ENCODE measurements at regions of chr1 and their contacts with region 1.

Region 1: DNA sequence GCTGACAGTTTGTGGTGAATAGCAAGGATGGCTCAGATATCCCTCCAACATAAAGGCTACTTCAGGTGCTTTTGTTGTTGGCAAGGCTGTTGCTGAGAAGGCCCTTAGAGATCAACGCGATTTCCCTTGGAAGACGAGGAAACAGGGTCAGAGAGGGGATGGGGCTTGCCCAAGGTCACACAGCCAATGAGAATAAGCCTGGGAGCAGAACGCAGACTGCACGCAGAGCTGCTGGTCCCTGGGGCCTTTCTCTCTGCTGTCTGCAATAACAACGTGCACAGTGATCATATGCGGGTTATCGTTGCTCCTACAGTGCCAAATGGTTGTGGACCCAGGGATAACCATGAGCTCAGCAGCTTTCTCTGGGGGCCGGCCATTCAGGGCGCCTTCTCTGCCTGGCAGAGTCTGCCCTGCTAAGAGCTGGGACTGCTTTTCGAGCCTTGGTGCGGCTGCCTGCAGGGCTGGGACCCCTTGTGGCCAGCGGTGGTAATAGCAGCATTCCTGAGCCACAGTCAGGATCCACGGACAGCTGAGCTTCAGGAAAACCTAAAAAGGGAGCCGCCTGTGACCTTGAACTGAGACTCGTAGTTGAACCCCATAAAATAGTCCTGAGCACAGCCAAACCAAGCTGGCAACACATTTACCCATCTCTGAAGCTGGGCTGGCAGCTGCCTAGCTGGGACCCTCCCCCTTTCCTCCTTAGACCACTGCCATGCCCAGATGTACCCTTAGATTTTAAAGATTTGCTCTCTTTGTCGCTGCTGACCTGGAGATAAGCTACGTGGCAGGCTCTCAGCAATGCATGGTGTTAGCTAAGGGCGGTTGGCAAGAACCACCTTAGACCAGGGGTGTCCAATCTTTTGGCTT is 39.8 kb downstream of the HTR6 start:
- DNase-seq: peak; percentile 33
- H3K4me3 ChIP-seq: no peak overlapping the region
- H3K27ac ChIP-seq: no peak overlapping the region
- H3K27me3 ChIP-seq: no peaks in the 10 kb centered on the region
- CTCF ChIP-seq: peak; percentile 97

Region 2: GRCh38 chr1:19682257-19682656 is 22.2 kb before region 1 on chr1:
- CTCF ChIA-PET with region 1: interaction called, 20 read pairs
- POLR2A ChIA-PET with region 1: interaction called, 5 read pairs
- DNase-seq: peak; percentile 70
- H3K4me3 ChIP-seq: no peak overlapping the region
- H3K27ac ChIP-seq: no peak overlapping the region
- H3K27me3 ChIP-seq: no peaks in the 10 kb centered on the region
- CTCF ChIP-seq: no peak

Region 3: GRCh38 chr1:19688041-19688842 is 16.2 kb before region 1 on chr1:
- CTCF ChIA-PET with region 1: interaction called, 25 read pairs
- POLR2A ChIA-PET with region 1: interaction called, 5 read pairs
- DNase-seq: no peak
- H3K4me3 ChIP-seq: no peak overlapping the region
- H3K27ac ChIP-seq: no peak overlapping the region
- H3K27me3 ChIP-seq: no peaks in the 10 kb centered on the region
- CTCF ChIP-seq: no peak

Region 4: GRCh38 chr1:19694298-19694697 is 10.2 kb before region 1 on chr1:
- CTCF ChIA-PET with region 1: interaction called, 25 read pairs
- POLR2A ChIA-PET with region 1: no interaction called
- DNase-seq: no peak
- H3K4me3 ChIP-seq: no peak overlapping the region
- H3K27ac ChIP-seq: no peak overlapping the region
- H3K27me3 ChIP-seq: no peaks in the 10 kb centered on the region
- CTCF ChIP-seq: no peak

Region 5: DNA sequence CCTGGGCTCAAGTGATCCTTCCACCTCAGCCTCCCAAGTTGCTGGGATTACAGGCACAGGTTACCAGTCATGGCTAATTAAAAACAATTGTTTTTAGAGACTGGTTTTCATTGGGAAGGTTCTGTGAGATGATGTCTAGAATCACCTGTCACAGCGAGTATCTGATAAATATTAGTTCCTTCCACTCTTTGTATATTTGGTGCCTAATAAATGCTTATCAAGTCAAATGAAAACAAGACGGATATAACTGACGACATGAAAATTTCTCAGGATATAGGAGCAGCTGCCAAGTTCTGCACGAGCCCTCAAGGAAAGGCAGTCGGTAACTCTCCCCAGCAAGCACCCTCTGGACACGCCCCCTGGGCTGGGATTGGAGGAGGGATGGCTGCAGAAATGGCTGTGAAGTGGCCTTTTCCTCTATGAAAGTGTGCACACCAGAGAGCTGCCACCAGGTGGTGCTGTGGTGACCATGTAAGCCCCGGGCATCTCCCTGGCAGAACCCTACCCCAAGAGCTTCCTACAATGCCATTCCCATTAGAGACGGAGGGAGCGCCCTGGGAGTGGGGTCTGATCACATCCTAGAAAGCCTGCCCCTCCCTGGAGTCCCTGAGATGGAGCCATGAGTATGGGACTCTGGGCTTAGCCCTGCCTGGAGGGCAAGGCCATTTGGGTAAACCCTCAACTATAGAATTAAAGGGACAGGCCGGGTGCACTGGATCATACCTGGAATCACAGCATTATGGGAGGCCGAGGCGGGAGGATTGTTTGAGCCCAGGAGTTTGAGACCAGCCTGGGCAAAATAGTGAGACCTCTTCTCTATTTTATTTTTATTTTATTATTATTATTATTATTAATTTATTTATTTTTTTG is 11.1 kb after region 1 on chr1:
- CTCF ChIA-PET with region 1: interaction called, 50 read pairs
- POLR2A ChIA-PET with region 1: no interaction called
- DNase-seq: peak; percentile 85
- H3K4me3 ChIP-seq: no peak overlapping the region
- H3K27ac ChIP-seq: no peak overlapping the region
- H3K27me3 ChIP-seq: no peaks in the 10 kb centered on the region
- CTCF ChIP-seq: peak; percentile 94

Region 6: DNA sequence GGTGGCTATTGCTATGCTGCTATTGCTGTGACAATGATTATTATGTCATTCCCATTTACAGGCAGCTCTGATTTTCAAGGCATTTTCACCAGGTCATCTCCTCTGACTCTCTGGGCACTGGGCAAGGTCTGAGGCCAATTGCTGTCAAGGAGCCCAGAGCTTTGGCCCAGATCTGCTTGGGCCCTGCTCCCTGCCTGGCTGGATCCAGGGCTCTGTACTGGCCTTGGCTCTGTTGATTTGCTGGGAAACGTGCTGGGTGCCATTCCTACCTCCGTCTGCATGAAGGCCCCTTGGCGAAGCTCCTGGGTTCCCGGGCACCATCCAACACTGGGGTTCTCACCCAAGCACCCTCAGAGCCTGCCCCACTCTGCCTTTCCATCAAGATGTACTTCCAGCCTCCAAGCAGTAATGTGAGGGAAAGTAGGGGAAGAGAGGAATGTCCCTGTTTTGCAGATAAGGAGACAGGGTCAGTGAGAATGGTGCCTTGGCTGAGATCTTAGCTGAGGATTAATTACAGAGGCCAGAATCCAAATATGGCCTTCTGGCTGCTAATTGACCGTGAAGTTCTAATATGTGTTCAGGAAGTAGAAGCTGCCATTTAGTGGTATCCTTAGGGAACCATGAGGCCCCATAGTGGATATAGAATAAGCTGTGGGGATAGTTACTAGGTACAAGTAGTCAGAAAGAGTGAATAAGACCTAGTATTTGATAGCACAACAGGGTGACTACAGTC is 24.1 kb after region 1 on chr1:
- CTCF ChIA-PET with region 1: interaction called, 25 read pairs
- POLR2A ChIA-PET with region 1: no interaction called
- DNase-seq: no peak
- H3K4me3 ChIP-seq: no peak overlapping the region
- H3K27ac ChIP-seq: no peak overlapping the region
- H3K27me3 ChIP-seq: no peaks in the 10 kb centered on the region
- CTCF ChIP-seq: no peak

Region 7: DNA sequence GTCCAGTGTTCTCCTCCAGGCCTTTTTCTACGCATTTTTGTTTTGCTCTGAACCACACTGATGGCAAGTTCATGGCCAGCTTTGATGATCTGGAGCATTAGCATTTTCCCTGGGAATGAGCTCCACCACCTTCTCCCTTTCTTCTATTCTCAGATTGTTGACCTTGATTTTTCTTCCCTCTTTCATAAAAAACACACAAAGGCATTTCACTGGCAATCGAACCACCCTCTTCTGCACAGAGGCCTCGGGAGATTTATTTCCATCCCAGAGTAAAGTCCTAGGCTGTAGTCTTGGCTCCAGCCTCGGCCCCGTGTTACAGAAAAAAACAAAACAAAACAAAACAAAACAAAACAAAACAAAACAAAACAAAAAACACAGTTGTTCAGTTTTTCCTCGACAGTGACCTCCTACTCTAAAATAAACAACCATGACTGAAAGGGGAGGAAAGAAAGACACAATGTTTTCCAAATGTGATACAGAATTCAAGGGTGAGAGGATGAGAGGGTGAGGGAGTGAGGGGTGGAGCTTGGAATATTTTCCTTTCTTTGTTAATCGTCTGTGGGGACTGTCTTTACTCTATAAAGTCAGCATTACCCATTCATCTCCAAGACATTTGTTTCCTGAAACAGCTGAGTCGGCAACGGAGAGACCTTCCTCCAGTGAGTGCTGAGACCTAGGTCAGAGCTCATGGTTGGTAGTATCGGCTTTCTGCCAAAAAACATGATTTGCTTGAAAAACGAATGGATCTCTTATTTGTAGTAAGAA is 140.4 kb after region 1 on chr1:
- CTCF ChIA-PET with region 1: no interaction called
- POLR2A ChIA-PET with region 1: no interaction called
- DNase-seq: no peak
- H3K4me3 ChIP-seq: no peak overlapping the region
- H3K27ac ChIP-seq: no peak overlapping the region
- H3K27me3 ChIP-seq: peaks cover 20% of the 10 kb centered on the region
- CTCF ChIP-seq: no peak

Measured in AG04450 (cell line).